HCT116 (cell line): ENCODE measurements at regions of chr5 and their contacts with region 1.

Region 1: GRCh38 chr5:131773805-131774204 is 23.0 kb downstream of the FNIP1 start:
- DNase-seq: no peak
- ATAC-seq: no peak
- H3K4me3 ChIP-seq: no peak overlapping the region
- H3K27ac ChIP-seq: no peak overlapping the region
- H3K4me1 ChIP-seq: no peaks in the 10 kb centered on the region
- H3K27me3 ChIP-seq: no peaks in the 10 kb centered on the region
- CTCF ChIP-seq: no peak
- POLR2A ChIP-seq: no peak
- RAD21 ChIP-seq: no peak

Region 2: GRCh38 chr5:130773811-130774210 is 1000.0 kb before region 1 on chr5:
- CTCF ChIA-PET with region 1: no interaction called
- POLR2A ChIA-PET with region 1: no interaction called
- RAD21 ChIA-PET with region 1: no interaction called
- intact Hi-C with region 1: no loop called
- DNase-seq: peak; percentile 83
- ATAC-seq: peak; percentile 100
- H3K4me3 ChIP-seq: no peak overlapping the region
- H3K27ac ChIP-seq: no peak overlapping the region
- H3K4me1 ChIP-seq: peaks cover 2 to 13% of the 10 kb centered on the region in 2 experiments; a peak in 3 of 4 replicates
- H3K27me3 ChIP-seq: no peaks in the 10 kb centered on the region
- CTCF ChIP-seq: peak; percentile 9 to 40 (median 26); a peak in 4 of 6 replicates
- POLR2A ChIP-seq: no peak
- RAD21 ChIP-seq: peak; percentile 53

Region 3: DNA sequence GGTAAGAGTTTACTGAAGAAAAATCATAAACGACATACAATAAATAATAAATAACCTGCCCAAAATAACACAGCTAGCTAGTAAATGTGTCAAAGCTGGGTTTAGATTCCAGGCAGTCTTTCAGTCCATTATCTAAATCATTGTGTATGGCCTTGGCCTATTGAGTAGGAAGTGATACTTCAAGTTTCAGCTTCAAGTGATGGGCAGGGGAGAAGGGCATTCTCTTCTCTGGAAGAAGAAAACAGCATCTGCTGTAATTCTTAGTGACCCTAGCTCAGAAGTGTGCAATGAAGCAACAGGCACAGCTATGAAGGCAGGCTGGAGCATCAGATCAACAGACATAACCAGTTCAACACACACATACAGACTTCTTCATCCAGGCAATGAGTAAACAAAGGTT is 19.4 kb before region 1 on chr5:
- CTCF ChIA-PET with region 1: no interaction called
- POLR2A ChIA-PET with region 1: no interaction called
- RAD21 ChIA-PET with region 1: no interaction called
- intact Hi-C with region 1: loop called (anchors 1 kb)
- DNase-seq: no peak
- ATAC-seq: no peak
- H3K4me3 ChIP-seq: no peak overlapping the region
- H3K27ac ChIP-seq: no peak overlapping the region
- H3K4me1 ChIP-seq: no peaks in the 10 kb centered on the region
- H3K27me3 ChIP-seq: no peaks in the 10 kb centered on the region
- CTCF ChIP-seq: no peak
- POLR2A ChIP-seq: no peak
- RAD21 ChIP-seq: no peak